OCI-LY7 (cell line): ENCODE measurements at regions of chr12 and their contacts with region 1.

Region 1: DNA sequence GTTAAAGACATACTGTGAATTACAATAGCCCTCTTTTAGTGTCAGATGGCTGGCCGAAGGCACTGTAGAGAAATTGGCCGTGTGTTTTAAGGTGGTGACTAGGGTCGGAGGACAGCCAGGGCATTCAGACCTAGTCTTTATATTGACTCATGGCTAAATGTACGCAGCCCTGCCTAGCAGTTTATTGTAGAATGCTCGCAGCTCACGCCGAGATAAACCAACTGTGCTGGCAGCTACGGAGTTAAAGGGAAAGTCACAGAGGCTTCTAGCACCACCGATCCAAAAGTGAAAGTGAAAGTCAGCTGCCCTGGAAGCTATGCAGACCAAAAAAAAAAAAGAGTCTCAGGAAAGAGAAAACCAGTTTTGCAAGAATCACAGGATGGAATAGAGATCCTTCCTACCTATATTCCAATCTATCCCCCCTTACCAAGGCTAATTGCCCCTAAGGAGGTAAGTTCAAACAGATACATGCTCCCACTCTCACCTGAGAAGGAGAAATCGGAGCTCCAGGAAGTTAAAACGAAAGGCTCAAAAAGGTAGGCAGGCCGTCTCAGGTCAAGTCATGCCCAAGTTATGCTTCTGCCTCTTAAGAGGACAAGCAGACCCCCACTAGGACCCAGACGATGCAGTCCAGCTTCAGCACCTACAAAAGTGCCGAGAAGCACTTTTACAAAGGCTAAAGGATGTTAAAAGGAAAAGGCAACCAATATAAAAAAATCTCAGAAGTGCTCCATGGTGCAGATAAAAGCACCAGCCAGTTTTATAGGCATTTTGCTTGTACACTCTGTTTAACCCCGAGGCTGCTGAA is 24.8 kb downstream of the KLRK1 start:
- DNase-seq: peak; percentile 91
- H3K4me3 ChIP-seq: peak overlapping the region; percentile 71
- H3K27ac ChIP-seq: peak overlapping the region; percentile 84
- H3K4me1 ChIP-seq: peaks cover 44% of the 10 kb centered on the region
- CTCF ChIP-seq: no peak

Region 2: DNA sequence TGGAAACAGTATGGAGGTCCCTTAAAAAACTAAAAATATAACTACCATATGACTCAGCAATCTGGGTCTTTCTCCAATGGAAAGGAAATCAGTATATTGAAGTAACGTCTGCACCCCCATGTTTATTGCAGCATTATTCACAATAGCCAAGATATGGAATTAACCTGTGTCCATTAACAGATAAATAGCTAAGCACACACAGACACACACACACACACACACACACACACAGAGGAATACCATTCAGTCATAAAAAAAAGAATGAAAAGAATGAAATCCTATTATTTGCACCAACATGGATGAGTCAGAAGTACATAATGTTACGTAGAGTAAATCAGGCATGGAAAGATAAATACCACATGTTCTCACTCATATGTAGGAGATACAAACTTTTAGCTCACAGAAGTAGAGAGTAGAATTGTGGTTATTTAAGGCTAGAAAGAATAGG is 20.2 kb after region 1 on chr12:
- CTCF ChIA-PET with region 1: interaction called, 3 read pairs
- POLR2A ChIA-PET with region 1: interaction called, 41 read pairs
- intact Hi-C with region 1: loop called (anchors 2 kb)
- DNase-seq: no peak
- H3K4me3 ChIP-seq: no peak overlapping the region
- H3K27ac ChIP-seq: no peak overlapping the region
- H3K4me1 ChIP-seq: peaks cover 33% of the 10 kb centered on the region
- CTCF ChIP-seq: no peak

Region 3: GRCh38 chr12:10409387-10409786 is 44.4 kb after region 1 on chr12 and contains the start of gene KLRC4:
- CTCF ChIA-PET with region 1: no interaction called
- POLR2A ChIA-PET with region 1: interaction called, 4 read pairs
- intact Hi-C with region 1: loop called (anchors 2 kb)
- DNase-seq: peak; percentile 92
- H3K4me3 ChIP-seq: peak within 1 kb of the TSS; percentile 73
- H3K27ac ChIP-seq: peak within 1 kb of the TSS; percentile 86
- H3K4me1 ChIP-seq: peaks cover 47% of the 10 kb centered on the region
- CTCF ChIP-seq: no peak
- total RNA-seq, gene KLRC4: 8.6 and 9.3 TPM in 2 replicates

Region 4: DNA sequence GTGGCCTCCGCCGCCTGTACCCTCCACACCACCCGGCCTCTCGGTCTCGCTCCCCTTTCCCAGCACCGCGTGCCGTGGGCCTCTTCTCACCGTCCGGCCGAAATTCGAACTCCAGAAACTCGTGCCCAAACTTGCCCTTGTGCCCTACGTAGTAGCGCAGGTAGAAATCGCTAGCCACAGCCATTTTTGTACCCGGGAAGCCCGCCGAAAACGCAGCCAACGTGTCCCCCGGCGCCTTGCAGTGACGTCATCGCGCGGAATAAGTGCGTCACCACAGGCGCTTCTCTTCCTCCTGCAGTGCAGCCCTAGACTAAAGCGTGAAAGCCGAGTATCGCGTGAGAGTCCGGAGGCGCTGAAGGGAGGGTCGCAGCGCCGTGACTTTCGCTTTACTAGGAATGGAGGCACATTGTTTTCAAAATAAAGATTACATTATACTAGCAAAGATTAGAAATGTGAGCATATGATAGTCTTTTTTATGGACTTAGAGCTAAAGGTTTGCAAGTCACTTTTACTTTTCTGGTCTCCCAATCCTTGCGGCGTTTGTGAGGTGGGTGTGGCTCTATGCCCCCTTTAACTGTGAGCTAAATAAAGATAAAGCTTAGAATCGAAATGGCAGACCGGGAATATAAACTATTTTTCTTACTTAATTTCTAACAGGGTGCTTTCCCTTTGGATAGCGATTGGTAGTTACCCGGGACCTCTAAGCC is 248.5 kb after region 1 on chr12 and contains the start of gene MAGOHB:
- CTCF ChIA-PET with region 1: no interaction called
- POLR2A ChIA-PET with region 1: no interaction called
- intact Hi-C with region 1: loop called (anchors 5 kb)
- DNase-seq: peak; percentile 97
- H3K4me3 ChIP-seq: peak within 1 kb of the TSS; percentile 91
- H3K27ac ChIP-seq: peak within 1 kb of the TSS; percentile 60
- H3K4me1 ChIP-seq: peaks cover 21% of the 10 kb centered on the region
- CTCF ChIP-seq: no peak
- total RNA-seq, gene MAGOHB: 35.6 and 44.4 TPM in 2 replicates